ENCODE measurements at regions of chr7 and their contacts with region 1.

Region 1: DNA sequence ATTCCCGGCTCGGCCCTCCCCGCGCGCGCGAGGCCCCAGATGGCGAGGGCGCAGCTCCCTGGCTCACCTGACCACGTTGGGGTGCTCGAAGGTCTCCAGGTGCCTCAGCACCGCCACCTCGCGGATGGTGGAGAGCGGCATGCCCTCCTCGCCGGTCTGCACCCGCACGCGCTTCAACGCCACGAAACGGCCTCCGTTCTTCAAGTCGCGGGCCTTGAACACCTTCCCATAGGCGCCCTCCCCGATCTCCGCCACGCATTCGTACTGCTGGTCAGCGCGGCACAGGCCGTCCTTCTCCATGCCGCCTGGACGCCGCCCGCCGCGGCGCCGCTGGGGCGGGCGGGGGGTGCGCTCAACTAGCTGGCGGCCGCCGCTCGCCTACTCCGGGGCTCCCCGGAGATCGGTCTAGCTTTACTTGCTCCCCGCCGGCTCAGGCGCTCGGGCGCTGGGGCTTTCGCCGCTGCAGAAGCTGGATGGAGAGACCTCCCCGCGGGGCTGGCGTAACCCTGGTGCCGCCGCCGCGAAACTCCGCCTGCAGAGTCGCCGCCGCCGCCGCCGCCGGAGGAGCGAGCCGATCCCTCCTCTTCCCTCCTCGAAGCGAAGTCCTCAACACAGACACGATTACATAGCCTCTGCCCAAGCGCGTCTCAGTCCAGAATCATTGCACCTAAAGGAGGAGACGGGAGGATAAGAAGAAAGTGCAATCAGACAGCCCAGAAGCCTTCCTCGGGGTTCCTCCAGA is 3.2 kb downstream of the CDK6 start:
- DNase-seq: peak; percentile 92
- ATAC-seq: peak; percentile 72
- H3K4me3 ChIP-seq: peak overlapping the region; percentile 88 to 96 (median 90)
- H3K4me3 Mint-ChIP-seq: peak overlapping the region; percentile 89
- H3K27ac ChIP-seq: peak overlapping the region; percentile 18 to 47
- H3K27ac Mint-ChIP-seq: peak overlapping the region; percentile 93
- H3K4me1 ChIP-seq: peaks cover 27 to 29% of the 10 kb centered on the region in 2 donors
- H3K4me1 Mint-ChIP-seq: peaks cover 40% of the 10 kb centered on the region
- H3K27me3 ChIP-seq: no peaks in the 10 kb centered on the region
- H3K27me3 Mint-ChIP-seq: no peaks in the 10 kb centered on the region
- CTCF ChIP-seq: peak; percentile 88

Region 2: GRCh38 chr7:91940572-91941341 is 892.4 kb before region 1 on chr7 and contains the start of gene AKAP9:
- CTCF ChIA-PET with region 1: no interaction called
- POLR2A ChIA-PET with region 1: no interaction called
- intact Hi-C with region 1: loop called (anchors 5 kb)
- DNase-seq: peak; percentile 93
- ATAC-seq: peak; percentile 92
- H3K4me3 ChIP-seq: peak within 1 kb of the TSS; percentile 74 to 98 (median 83)
- H3K4me3 Mint-ChIP-seq: peak within 1 kb of the TSS; percentile 95
- H3K27ac ChIP-seq: peak within 1 kb of the TSS; percentile 90 to 97
- H3K27ac Mint-ChIP-seq: peak within 1 kb of the TSS; percentile 95
- H3K4me1 ChIP-seq: peaks cover 20 to 22% of the 10 kb centered on the region in 2 donors
- H3K4me1 Mint-ChIP-seq: peaks cover 31% of the 10 kb centered on the region
- H3K27me3 ChIP-seq: no peaks in the 10 kb centered on the region
- H3K27me3 Mint-ChIP-seq: no peaks in the 10 kb centered on the region
- CTCF ChIP-seq: no peak
- total RNA-seq, gene AKAP9: 101 and 106 TPM in 2 replicates

Region 3: GRCh38 chr7:92447345-92448204 is 385.6 kb before region 1 on chr7 and contains the start of gene GATAD1:
- CTCF ChIA-PET with region 1: no interaction called
- POLR2A ChIA-PET with region 1: no interaction called
- intact Hi-C with region 1: loop called (anchors 1 kb)
- DNase-seq: peak; percentile 91
- ATAC-seq: peak; percentile 84
- H3K4me3 ChIP-seq: peak within 1 kb of the TSS; percentile 69 to 97 (median 93)
- H3K4me3 Mint-ChIP-seq: peak within 1 kb of the TSS; percentile 94
- H3K27ac ChIP-seq: peak within 1 kb of the TSS; percentile 89 to 97
- H3K27ac Mint-ChIP-seq: peak within 1 kb of the TSS; percentile 97
- H3K4me1 ChIP-seq: peaks cover 6 to 12% of the 10 kb centered on the region in 2 donors
- H3K4me1 Mint-ChIP-seq: peaks cover 8% of the 10 kb centered on the region
- H3K27me3 ChIP-seq: no peaks in the 10 kb centered on the region
- H3K27me3 Mint-ChIP-seq: no peaks in the 10 kb centered on the region
- CTCF ChIP-seq: peak; percentile 84
- total RNA-seq, gene GATAD1: 65.9 and 71.7 TPM in 2 replicates

Region 4: DNA sequence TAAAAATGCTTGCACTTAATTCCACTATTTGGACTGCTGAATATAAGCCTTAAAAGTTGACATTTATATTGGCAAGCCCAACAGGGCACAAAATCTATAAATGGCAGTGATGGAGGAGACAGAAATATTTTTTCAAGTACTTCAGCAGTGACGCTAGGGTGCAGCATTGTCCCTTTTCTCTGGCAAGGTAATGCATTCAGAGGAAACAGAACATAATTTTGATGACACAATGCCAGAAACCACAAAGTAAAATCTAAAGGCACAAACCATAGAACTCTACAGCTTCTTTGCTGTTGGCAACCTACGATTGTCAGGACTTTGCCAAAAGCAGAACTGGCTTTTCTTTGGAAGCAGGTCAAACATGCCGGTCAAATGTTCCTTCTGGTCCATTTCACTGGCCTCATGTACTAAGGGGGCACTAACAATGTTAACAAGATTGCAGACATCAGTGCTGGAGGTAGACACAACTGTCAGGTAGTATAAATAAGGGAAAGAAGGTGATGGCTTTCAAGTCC is 212.1 kb before region 1 on chr7:
- CTCF ChIA-PET with region 1: interaction called, 28 read pairs
- POLR2A ChIA-PET with region 1: no interaction called
- intact Hi-C with region 1: loop called (anchors 1 kb)
- DNase-seq: peak; percentile 78
- ATAC-seq: peak; percentile 78
- H3K4me3 ChIP-seq: no peak overlapping the region
- H3K4me3 Mint-ChIP-seq: no peak overlapping the region
- H3K27ac ChIP-seq: no peak overlapping the region
- H3K27ac Mint-ChIP-seq: peak overlapping the region; percentile 11
- H3K4me1 ChIP-seq: peaks cover 8 to 9% of the 10 kb centered on the region in 2 donors
- H3K4me1 Mint-ChIP-seq: peaks cover 8% of the 10 kb centered on the region
- H3K27me3 ChIP-seq: no peaks in the 10 kb centered on the region
- H3K27me3 Mint-ChIP-seq: no peaks in the 10 kb centered on the region
- CTCF ChIP-seq: peak; percentile 78

Region 5: DNA sequence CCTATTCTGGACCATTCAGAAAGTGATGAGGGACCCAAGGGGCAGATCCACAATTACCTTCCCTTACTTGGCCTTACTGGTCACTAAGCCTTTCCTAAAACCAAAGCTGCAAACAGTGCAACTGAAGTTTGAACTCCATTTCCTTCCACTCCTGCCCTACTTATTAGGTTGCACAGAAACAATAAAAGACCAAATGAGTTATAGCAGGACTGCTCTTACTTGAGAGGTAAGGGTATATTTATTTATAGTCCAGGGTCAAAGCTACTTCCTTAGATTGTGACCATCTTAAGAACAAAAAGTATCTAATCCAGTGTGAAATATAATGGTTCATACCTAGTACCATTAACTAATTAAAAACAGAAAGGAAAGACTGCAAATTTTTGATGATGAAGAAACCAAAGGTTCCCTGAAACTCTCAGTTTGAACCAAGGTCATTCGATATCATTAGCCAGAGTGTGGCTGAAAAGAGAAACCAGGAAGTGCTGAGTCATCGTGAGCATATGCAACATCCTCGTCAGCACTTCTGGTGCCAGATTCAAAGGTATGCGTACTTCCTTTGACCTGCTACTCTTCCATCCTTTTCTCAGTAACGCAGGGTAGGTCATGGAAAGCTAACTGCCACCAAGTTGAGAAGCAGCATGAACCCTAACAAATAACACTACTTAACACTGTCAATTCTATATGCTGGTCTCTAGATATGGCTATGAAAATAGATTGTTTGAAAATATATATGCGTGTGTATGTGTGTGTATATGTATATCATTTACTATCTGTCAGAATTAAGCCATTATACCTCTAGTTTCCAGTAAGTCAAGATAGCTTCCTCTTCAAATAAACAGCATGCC is 23.6 kb before region 1 on chr7:
- CTCF ChIA-PET with region 1: interaction called, 6 read pairs
- POLR2A ChIA-PET with region 1: no interaction called
- intact Hi-C with region 1: loop called (anchors 2 kb)
- DNase-seq: peak; percentile 66
- ATAC-seq: peak; percentile 78
- H3K4me3 ChIP-seq: no peak overlapping the region
- H3K4me3 Mint-ChIP-seq: peak overlapping the region; percentile 63
- H3K27ac ChIP-seq: no peak overlapping the region
- H3K27ac Mint-ChIP-seq: peak overlapping the region; percentile 28
- H3K4me1 ChIP-seq: peaks cover 16 to 20% of the 10 kb centered on the region in 2 donors
- H3K4me1 Mint-ChIP-seq: peaks cover 27% of the 10 kb centered on the region
- H3K27me3 ChIP-seq: no peaks in the 10 kb centered on the region
- H3K27me3 Mint-ChIP-seq: no peaks in the 10 kb centered on the region
- CTCF ChIP-seq: no peak

Region 6: GRCh38 chr7:92889081-92889480 is 55.9 kb after region 1 on chr7:
- CTCF ChIA-PET with region 1: no interaction called
- POLR2A ChIA-PET with region 1: no interaction called
- intact Hi-C with region 1: no loop called
- DNase-seq: no peak
- ATAC-seq: no peak
- H3K4me3 ChIP-seq: no peak overlapping the region
- H3K4me3 Mint-ChIP-seq: no peak overlapping the region
- H3K27ac ChIP-seq: no peak overlapping the region
- H3K27ac Mint-ChIP-seq: no peak overlapping the region
- H3K4me1 ChIP-seq: no peaks in the 10 kb centered on the region
- H3K4me1 Mint-ChIP-seq: no peaks in the 10 kb centered on the region
- H3K27me3 ChIP-seq: no peaks in the 10 kb centered on the region
- H3K27me3 Mint-ChIP-seq: no peaks in the 10 kb centered on the region
- CTCF ChIP-seq: no peak

Region 7: DNA sequence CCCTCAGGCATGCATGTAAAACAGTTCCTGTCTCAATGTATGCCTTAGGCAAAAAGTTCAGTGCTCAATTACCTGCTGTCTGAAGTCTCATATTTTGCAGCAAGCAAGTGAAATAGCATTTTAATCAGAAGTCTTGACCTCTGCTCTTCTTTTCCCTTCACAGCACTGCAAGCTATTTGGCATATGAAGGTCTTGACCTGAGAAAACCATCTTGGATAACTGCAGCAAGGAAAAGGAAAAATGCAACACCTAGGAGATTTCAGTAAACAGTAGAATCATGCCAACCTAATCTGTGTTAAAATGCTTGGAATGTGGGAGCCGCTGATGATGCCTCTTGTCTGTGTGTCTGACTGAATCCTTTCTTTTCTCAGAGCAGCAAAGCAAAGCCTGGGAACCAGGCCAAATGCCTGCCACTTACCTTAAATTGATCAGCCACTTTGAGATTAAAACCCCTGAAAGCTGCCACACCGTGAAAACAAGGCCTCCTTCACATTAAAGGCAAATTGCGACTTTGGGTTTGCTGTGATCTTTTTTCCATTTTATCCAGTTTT is 83.6 kb after region 1 on chr7:
- CTCF ChIA-PET with region 1: no interaction called
- POLR2A ChIA-PET with region 1: no interaction called
- intact Hi-C with region 1: no loop called
- DNase-seq: no peak
- ATAC-seq: no peak
- H3K4me3 ChIP-seq: no peak overlapping the region
- H3K4me3 Mint-ChIP-seq: no peak overlapping the region
- H3K27ac ChIP-seq: no peak overlapping the region
- H3K27ac Mint-ChIP-seq: no peak overlapping the region
- H3K4me1 ChIP-seq: no peaks in the 10 kb centered on the region
- H3K4me1 Mint-ChIP-seq: no peaks in the 10 kb centered on the region
- H3K27me3 ChIP-seq: no peaks in the 10 kb centered on the region
- H3K27me3 Mint-ChIP-seq: no peaks in the 10 kb centered on the region
- CTCF ChIP-seq: no peak

Region 8: GRCh38 chr7:93055543-93056107 is 222.4 kb after region 1 on chr7:
- CTCF ChIA-PET with region 1: no interaction called
- POLR2A ChIA-PET with region 1: no interaction called
- intact Hi-C with region 1: loop called (anchors 5 kb)
- DNase-seq: peak; percentile 58
- ATAC-seq: peak; percentile 56
- H3K4me3 ChIP-seq: no peak overlapping the region
- H3K4me3 Mint-ChIP-seq: no peak overlapping the region
- H3K27ac ChIP-seq: no peak overlapping the region
- H3K27ac Mint-ChIP-seq: no peak overlapping the region
- H3K4me1 ChIP-seq: no peaks in the 10 kb centered on the region
- H3K4me1 Mint-ChIP-seq: peaks cover 5% of the 10 kb centered on the region
- H3K27me3 ChIP-seq: peaks cover 0 to under 1% (median 0%) of the 10 kb centered on the region in 4 experiments
- H3K27me3 Mint-ChIP-seq: peaks cover 1% of the 10 kb centered on the region
- CTCF ChIP-seq: peak; percentile 93

Measured in B cell (primary cell).